ENCODE measurements at regions of chr7 and their contacts with region 1.

Region 1: GRCh38 chr7:35037526-35038339 is 448 bp upstream of the DPY19L1 start:
- DNase-seq: peak; percentile 96 to 98 (median 97)
- ATAC-seq: peak; percentile 86 to 95 (median 90)
- H3K4me3 ChIP-seq: peak overlapping the region; percentile 53 to 75 (median 68)
- H3K27ac ChIP-seq: peak overlapping the region; percentile 66 to 72 (median 67)
- H3K4me1 ChIP-seq: peaks cover 0 to 15% (median 0%) of the 10 kb centered on the region in 4 donors
- H3K27me3 ChIP-seq: no peaks in the 10 kb centered on the region
- CTCF ChIP-seq: peak; percentile 70 to 87 (median 82)
- POLR2A ChIP-seq: no peak

Region 2: DNA sequence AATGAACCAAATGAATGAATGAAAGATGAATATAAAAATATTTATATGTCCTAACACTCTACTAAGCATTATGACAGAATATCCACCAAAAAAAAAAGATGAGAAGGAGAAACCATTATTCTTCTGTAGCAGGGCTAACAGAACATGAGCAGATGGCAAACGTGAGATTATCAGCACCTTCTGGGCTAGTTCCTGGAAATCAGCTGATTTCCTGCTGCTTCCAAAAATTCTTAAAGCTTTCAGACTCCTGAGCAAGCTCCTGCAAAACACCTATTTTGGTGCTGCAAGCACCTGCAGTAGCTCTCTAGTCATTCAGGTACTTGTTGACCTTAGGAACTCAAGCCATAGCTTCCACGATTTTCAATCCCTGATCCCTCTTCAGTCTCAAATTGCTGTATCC is 328.0 kb before region 1 on chr7:
- intact Hi-C with region 1: no loop called
- DNase-seq: no peak
- ATAC-seq: no peak
- H3K4me3 ChIP-seq: no peak overlapping the region
- H3K27ac ChIP-seq: no peak overlapping the region
- H3K4me1 ChIP-seq: no peaks in the 10 kb centered on the region
- H3K27me3 ChIP-seq: no peaks in the 10 kb centered on the region
- CTCF ChIP-seq: no peak
- POLR2A ChIP-seq: no peak

Region 3: GRCh38 chr7:34823640-34824258 is 214.0 kb before region 1 on chr7:
- intact Hi-C with region 1: loop called in 1 of 2 experiments (anchors 10 kb)
- DNase-seq: peak in 2 of 3 donors; percentile 53 to 59
- ATAC-seq: peak; percentile 83 to 89 (median 86)
- H3K4me3 ChIP-seq: no peak overlapping the region
- H3K27ac ChIP-seq: no peak overlapping the region
- H3K4me1 ChIP-seq: no peaks in the 10 kb centered on the region
- H3K27me3 ChIP-seq: no peaks in the 10 kb centered on the region
- CTCF ChIP-seq: peak; percentile 66 to 91 (median 87)
- POLR2A ChIP-seq: no peak

Region 4: DNA sequence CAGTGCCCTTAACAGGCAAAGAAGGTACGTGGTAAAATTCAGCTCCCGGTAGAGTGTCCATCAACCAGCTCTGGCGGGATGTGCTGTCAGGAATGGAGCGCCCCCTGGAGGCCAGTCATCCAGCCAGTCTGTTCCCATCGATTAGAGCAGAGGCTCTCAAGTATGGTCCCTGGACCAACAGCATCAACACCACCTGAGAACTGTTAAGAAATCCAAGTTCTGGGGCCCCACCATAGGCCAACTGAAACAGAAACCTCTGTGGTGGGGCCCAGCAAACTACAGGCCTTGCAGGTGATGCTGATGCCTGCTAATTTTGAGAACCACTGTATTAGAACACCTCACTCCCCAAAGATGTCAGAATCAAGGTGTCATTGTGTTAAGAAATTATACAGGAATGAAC is 109.7 kb before region 1 on chr7:
- intact Hi-C with region 1: no loop called
- DNase-seq: peak in 1 of 3 donors; percentile 22
- ATAC-seq: peak in 2 of 4 donors; percentile 40 to 55
- H3K4me3 ChIP-seq: no peak overlapping the region
- H3K27ac ChIP-seq: no peak overlapping the region
- H3K4me1 ChIP-seq: no peaks in the 10 kb centered on the region
- H3K27me3 ChIP-seq: no peaks in the 10 kb centered on the region
- CTCF ChIP-seq: peak in 2 of 4 donors; percentile 26 to 35
- POLR2A ChIP-seq: no peak